OCI-LY7 (cell line): ENCODE measurements at regions of chr16 and their contacts with region 1.

Region 1: DNA sequence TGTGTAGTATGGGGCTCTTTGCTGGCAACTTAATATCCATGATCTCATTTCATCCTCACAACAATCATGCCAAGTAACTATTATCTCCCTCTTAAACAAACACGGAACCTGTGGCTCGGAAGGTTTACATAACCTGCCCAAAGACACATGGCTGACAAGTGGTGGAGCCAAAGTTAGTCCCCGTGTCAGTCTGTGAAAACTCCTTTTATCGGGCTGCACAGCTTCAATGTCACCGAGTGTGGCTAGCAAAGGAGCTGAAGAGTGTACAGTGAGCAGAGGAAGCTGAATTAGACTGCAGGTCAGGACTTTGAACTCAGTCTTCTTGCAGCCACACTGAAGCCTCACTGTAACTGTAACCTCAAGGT is 80.3 kb downstream of the PARN start:
- DNase-seq: no peak
- H3K4me3 ChIP-seq: no peak overlapping the region
- H3K27ac ChIP-seq: no peak overlapping the region
- H3K4me1 ChIP-seq: peaks cover 4% of the 10 kb centered on the region
- CTCF ChIP-seq: no peak

Region 2: DNA sequence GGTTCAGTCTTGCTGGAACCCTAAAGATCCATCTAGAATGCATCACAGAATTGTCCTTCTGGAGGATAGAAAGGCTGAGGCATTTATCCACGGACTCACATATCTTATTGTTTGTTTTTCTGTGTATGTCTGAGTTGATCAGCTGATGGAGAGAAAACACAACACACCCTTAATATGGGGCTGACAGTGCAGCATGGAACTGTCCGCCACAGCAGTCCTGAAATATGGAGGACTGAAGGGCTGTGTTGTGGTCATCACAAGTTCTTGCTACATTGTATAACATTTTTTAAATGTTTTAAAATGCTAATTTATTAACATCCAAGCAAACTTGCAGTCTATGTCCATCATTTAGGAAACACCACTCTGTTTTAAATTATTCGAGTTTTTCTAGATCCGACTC is 1078.7 kb before region 1 on chr16:
- CTCF ChIA-PET with region 1: no interaction called
- POLR2A ChIA-PET with region 1: no interaction called
- intact Hi-C with region 1: no loop called
- DNase-seq: no peak
- H3K4me3 ChIP-seq: no peak overlapping the region
- H3K27ac ChIP-seq: no peak overlapping the region
- H3K4me1 ChIP-seq: no peaks in the 10 kb centered on the region
- CTCF ChIP-seq: no peak

Region 3: DNA sequence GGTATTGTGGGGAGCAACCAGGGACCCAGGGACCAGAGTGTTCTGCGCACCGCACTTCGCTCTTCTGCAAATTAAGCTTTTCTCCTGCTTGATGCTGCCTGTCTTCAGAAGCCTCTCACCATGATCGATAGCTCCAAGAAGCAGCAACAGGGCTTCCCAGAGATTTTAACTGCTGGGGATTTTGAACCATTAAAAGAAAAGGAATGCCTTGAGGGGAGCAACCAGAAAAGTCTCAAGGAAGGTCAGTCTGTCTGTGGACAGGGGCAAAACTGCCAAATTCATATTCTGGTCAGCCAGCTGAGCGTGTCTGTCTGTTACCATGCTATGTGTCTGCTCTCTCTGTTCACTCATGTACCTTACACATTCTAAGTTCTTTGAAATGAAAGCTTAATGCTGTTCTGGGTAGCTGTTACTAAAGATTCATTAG is 363.0 kb before region 1 on chr16:
- CTCF ChIA-PET with region 1: interaction called, 10 read pairs
- POLR2A ChIA-PET with region 1: no interaction called
- intact Hi-C with region 1: no loop called
- DNase-seq: no peak
- H3K4me3 ChIP-seq: no peak overlapping the region
- H3K27ac ChIP-seq: no peak overlapping the region
- H3K4me1 ChIP-seq: no peaks in the 10 kb centered on the region
- CTCF ChIP-seq: no peak

Region 4: GRCh38 chr16:14485121-14485551 is 64.6 kb before region 1 on chr16:
- CTCF ChIA-PET with region 1: no interaction called
- POLR2A ChIA-PET with region 1: no interaction called
- intact Hi-C with region 1: no loop called
- DNase-seq: no peak
- H3K4me3 ChIP-seq: no peak overlapping the region
- H3K27ac ChIP-seq: no peak overlapping the region
- H3K4me1 ChIP-seq: peaks cover 9% of the 10 kb centered on the region
- CTCF ChIP-seq: no peak

Region 5: DNA sequence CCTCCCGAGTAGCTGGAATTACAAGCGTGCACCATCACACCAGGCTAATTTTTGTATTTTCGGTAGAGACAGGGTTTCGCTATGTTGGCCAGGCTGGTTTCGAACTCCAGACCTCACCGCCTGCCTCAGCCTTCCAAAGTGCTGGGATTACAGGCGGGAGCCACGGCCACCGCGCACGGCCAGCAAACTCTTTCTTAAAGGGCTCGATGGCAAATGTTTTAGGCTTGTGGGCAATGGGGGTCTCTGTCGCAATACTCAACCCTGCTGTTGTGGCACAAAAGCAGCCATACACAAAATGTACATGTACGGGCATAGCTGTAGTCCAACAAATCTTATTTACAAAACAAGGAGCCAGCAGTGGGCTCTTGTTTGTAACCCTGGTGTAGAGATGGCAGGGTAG is 61.9 kb after region 1 on chr16:
- CTCF ChIA-PET with region 1: no interaction called
- POLR2A ChIA-PET with region 1: no interaction called
- intact Hi-C with region 1: no loop called
- DNase-seq: no peak
- H3K4me3 ChIP-seq: no peak overlapping the region
- H3K27ac ChIP-seq: no peak overlapping the region
- H3K4me1 ChIP-seq: peaks cover 47% of the 10 kb centered on the region
- CTCF ChIP-seq: no peak